Activated CD4-positive, alpha-beta T cell treated with anti-CD3 and anti-CD28 coated beads for 36 hours (primary cell): ENCODE measurements at regions of chr6 and their contacts with region 1.

Region 1: GRCh38 chr6:118709859-118710350 is 58.5 kb upstream of the CEP85L start:
- DNase-seq: peak; percentile 87
- ATAC-seq: peak; percentile 81
- H3K4me3 Mint-ChIP-seq: peak overlapping the region; percentile 85
- H3K27ac Mint-ChIP-seq: peak overlapping the region; percentile 91
- H3K4me1 Mint-ChIP-seq: peaks cover 76% of the 10 kb centered on the region
- H3K27me3 Mint-ChIP-seq: no peaks in the 10 kb centered on the region

Region 2: DNA sequence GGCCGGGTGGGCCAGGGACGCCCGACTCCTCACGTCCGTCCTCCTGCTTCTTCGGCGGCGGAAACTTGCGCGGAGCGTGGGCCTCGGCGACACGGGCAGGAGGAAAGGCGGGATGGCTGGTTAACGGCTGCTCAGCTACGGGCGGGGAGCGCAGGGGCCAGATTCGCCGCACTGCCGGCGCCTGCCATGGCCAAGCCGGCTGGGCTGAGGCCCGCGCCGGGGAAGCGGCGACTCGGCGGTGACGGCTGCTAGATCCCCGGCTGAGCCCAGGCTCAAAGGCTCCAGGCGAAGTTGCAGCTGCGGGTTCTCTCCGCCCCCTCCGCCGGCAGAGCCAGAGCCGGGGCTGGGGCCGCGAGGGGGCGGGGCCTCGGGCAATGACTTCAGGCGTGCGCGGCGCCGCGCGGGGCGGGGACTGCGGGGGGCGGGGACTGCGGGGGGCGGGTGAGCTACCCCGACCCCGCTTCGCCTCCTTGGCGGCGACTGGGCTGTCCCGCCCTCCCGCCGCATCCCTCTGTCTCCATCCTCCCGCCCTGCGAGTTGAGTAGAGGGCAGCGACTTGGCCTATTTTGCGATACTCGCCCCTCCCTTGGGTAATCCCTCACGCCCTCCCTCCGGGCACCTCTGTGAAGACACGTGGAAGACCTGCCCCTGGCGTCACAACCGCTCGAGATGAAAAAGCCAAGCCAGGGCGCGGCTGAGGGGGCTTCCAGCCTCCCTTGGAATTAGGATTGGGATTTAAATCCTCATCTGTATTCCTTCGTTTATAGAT is 58.4 kb before region 1 on chr6 and contains the start of gene CEP85L:
- CTCF ChIA-PET with region 1: interaction called, 4 read pairs
- POLR2A ChIA-PET with region 1: interaction called, 9 read pairs
- intact Hi-C with region 1: loop called (anchors 1 kb)
- DNase-seq: peak; percentile 96
- ATAC-seq: peak; percentile 93
- H3K4me3 Mint-ChIP-seq: peak within 1 kb of the TSS; percentile 85
- H3K27ac Mint-ChIP-seq: peak within 1 kb of the TSS; percentile 94
- H3K4me1 Mint-ChIP-seq: peaks cover 50% of the 10 kb centered on the region
- H3K27me3 Mint-ChIP-seq: no peaks in the 10 kb centered on the region
- total RNA-seq, gene CEP85L: 29.5 to 29.7 TPM

Region 3: GRCh38 chr6:118680452-118681095 is 29.3 kb before region 1 on chr6:
- CTCF ChIA-PET with region 1: interaction called, 7 read pairs
- POLR2A ChIA-PET with region 1: interaction called, 5 read pairs
- intact Hi-C with region 1: loop called (anchors 1 to 2 kb)
- DNase-seq: peak; percentile 58
- ATAC-seq: peak; percentile 89
- H3K4me3 Mint-ChIP-seq: peak overlapping the region; percentile 30
- H3K27ac Mint-ChIP-seq: peak overlapping the region; percentile 74
- H3K4me1 Mint-ChIP-seq: peaks cover 62% of the 10 kb centered on the region
- H3K27me3 Mint-ChIP-seq: no peaks in the 10 kb centered on the region

Region 4: GRCh38 chr6:118724211-118724610 is 14.3 kb after region 1 on chr6:
- CTCF ChIA-PET with region 1: interaction called, 63 read pairs
- POLR2A ChIA-PET with region 1: interaction called, 49 read pairs
- intact Hi-C with region 1: loop called (anchors 1 kb)
- DNase-seq: no peak
- ATAC-seq: peak; percentile 37
- H3K4me3 Mint-ChIP-seq: no peak overlapping the region
- H3K27ac Mint-ChIP-seq: peak overlapping the region; percentile 70
- H3K4me1 Mint-ChIP-seq: peaks cover 75% of the 10 kb centered on the region
- H3K27me3 Mint-ChIP-seq: no peaks in the 10 kb centered on the region

Region 5: DNA sequence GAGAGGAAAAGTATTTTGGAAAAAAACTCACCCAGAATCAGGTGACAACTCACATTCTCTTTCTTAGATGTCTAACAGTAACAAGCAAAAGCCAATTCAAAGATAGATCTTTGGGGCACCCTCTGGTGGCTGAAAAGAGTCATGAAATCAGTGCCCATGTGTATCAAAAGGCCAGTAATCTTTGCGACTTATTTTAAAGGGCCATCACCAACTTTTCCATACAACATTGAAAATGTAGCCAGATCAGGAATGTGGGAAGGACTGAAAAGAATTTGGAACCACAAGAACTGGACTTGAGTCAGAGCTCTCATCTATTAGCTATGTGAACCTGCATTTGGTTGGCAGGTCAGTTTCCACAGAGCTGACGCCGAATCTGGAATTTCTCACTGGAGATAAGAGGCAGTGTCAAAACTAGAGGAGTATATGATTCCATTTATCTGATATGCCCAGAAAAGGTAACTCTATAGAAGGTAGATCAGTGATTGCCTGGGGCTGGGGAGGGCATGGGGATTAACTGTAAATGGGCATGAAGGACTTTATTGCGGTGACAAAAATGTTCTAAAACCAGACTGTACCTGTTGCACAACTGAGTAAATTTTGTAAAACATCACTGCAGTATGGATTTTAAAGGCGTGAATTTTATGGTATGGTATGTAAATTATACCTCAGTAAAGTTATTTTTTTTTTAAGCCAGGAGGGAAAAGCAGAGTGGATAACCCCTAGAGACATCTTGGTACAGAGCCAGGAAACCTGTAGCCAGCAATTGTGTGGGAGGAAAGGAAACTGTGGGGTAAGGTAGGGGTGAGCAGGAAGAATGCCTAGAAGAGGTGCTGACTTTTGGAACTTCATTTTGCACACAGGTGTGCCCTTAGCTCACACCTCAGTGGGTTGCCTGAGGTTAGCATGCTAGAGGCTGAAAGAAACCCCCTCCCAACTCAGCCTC is 67.0 kb after region 1 on chr6:
- CTCF ChIA-PET with region 1: interaction called, 14 read pairs
- POLR2A ChIA-PET with region 1: no interaction called
- intact Hi-C with region 1: loop called (anchors 1 to 2 kb)
- DNase-seq: peak; percentile 78
- ATAC-seq: peak; percentile 92
- H3K4me3 Mint-ChIP-seq: no peak overlapping the region
- H3K27ac Mint-ChIP-seq: peak overlapping the region; percentile 10
- H3K4me1 Mint-ChIP-seq: peaks cover 22% of the 10 kb centered on the region
- H3K27me3 Mint-ChIP-seq: no peaks in the 10 kb centered on the region

Region 6: DNA sequence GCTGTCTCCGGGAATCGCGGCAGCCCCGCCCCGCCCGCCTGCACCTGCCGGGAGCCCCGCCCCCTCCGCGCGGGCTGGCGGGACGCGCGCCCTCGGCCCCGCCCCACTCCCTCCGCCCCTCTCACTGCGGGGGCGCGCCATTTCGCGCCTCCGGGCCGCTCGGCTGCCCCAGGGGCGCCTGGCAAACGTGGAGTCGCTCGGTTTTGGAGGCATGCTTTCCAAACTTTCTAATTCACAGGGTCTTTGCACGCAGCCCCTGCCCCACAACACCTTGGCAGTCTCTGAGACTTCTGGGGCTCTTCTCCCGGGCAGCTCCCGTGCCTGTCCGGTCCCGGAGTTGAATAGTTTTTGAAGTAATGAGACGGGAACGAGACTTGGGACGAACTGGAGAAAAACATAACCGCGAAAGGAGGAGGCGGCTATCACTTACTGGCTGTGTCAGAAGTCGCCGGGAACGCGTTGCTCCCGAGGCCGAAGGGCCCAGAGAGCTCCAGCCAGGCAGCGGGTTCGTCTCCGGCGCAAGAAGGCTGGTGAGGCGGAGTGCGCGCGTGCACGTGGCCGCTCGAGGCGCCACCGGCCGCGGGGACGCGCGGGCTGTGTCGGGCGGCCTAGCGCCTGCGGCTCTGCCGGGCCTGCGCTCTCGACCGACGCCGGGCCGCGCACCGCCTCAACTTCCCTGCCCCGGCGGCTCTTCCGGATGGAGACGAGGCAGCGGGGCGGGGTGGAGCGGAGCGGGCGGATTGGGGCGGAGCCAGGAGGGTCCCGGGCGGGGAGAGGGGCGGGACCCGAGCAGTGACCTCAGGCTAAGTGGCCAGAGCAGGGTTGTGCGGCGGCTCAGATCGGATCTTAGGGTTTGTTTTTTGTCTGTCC is 224.8 kb after region 1 on chr6 and contains the start of gene MCM9:
- CTCF ChIA-PET with region 1: no interaction called
- POLR2A ChIA-PET with region 1: interaction called, 3 read pairs
- intact Hi-C with region 1: loop called in 1 of 2 experiments (anchors 1 kb)
- DNase-seq: peak; percentile 94
- ATAC-seq: peak; percentile 97
- H3K4me3 Mint-ChIP-seq: peak within 1 kb of the TSS; percentile 87
- H3K27ac Mint-ChIP-seq: peak within 1 kb of the TSS; percentile 94
- H3K4me1 Mint-ChIP-seq: peaks cover 35% of the 10 kb centered on the region
- H3K27me3 Mint-ChIP-seq: no peaks in the 10 kb centered on the region
- total RNA-seq, gene MCM9: 17.0 to 17.2 TPM

Region 7: DNA sequence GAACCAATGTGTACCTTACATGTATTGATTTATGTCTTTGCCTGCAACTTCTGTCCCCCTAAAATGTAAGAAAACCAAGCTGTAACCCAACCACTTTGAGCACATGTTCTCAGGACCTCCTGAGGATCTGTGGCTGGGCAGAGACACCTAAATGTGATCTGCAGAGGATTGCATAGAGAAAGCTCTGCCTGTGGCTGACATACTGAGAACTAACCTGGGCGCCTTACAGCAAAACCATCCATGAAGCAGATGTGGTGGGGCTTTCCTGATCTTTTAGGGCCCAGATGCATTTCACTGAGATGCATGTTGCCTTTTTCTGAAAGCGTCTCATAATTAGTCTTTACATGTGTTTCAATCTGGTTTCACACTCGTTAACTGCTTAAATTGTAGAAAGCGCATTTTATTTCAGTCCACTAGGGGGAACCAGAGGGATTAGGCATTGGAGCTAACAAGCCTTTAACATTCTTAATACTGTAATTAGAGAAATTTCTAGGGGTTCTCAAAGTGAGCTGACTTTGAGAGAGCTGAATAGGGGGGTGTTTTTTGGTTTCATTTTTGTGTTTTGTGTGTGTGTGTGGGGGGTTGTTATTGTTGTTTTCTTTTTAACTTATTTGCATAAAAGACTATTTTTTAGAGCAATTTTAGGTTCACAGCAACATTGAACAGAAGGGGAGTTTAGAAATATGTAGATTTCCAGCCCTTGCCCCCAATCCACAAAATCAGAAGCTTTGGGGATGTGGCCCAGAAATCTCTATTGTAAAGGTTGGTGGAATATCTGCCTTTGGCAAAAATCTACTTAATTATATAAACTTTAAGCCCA is 419.5 kb after region 1 on chr6:
- CTCF ChIA-PET with region 1: no interaction called
- POLR2A ChIA-PET with region 1: no interaction called
- intact Hi-C with region 1: no loop called
- DNase-seq: no peak
- ATAC-seq: peak; percentile 86
- H3K4me3 Mint-ChIP-seq: no peak overlapping the region
- H3K27ac Mint-ChIP-seq: no peak overlapping the region
- H3K4me1 Mint-ChIP-seq: peaks cover 6% of the 10 kb centered on the region
- H3K27me3 Mint-ChIP-seq: no peaks in the 10 kb centered on the region